CD8-positive, alpha-beta memory T cell (primary cell): ENCODE measurements at regions of chr7 and their contacts with region 1.

Region 1: DNA sequence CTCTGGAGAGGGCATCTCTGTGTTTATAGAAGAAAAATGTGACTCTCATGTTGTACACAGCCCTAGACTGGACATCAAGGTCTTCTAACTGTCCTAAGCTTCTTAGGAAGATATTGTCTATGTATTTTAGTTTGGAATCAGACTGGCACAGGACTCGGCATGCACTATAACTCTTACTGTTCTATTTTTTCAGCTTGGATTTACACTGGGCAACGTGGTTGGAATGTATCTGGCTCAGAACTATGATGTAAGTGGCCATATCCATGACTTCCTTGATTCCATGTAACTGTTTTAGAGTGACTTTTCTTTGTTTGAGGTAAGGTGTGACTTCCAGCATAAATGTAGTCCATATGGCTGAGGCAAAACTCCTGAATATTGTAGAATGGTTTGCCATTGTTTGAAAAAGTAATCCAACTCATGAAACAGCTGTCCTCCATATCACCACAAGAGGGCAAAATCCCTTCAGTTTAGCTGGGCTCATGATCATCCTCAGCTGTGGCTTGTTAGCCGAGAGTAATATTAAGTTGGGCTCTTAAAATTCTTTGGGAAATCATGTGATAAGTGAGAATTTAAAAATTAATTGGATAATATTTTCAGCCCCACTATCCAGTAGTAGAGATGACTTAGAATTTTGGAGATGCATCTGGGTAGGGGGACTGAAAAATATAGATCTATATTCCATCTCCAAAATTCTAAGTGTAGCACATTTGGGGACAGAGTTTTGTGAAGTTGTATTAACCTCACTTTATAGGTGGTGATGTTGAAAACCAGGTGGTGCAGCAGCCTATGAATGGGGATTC is 10.4 kb downstream of the STMP1 start:
- DNase-seq: no peak
- H3K4me3 ChIP-seq: no peak overlapping the region
- H3K4me3 Mint-ChIP-seq: no peak overlapping the region
- H3K27ac ChIP-seq: no peak overlapping the region
- H3K27ac Mint-ChIP-seq: peak overlapping the region in 1 of 8 donors; percentile 55
- H3K4me1 ChIP-seq: no peaks in the 10 kb centered on the region
- H3K4me1 Mint-ChIP-seq: peaks cover 21 to 41% (median 39%) of the 10 kb centered on the region in 3 donors
- H3K27me3 ChIP-seq: no peaks in the 10 kb centered on the region
- H3K27me3 Mint-ChIP-seq: no peaks in the 10 kb centered on the region

Region 2: DNA sequence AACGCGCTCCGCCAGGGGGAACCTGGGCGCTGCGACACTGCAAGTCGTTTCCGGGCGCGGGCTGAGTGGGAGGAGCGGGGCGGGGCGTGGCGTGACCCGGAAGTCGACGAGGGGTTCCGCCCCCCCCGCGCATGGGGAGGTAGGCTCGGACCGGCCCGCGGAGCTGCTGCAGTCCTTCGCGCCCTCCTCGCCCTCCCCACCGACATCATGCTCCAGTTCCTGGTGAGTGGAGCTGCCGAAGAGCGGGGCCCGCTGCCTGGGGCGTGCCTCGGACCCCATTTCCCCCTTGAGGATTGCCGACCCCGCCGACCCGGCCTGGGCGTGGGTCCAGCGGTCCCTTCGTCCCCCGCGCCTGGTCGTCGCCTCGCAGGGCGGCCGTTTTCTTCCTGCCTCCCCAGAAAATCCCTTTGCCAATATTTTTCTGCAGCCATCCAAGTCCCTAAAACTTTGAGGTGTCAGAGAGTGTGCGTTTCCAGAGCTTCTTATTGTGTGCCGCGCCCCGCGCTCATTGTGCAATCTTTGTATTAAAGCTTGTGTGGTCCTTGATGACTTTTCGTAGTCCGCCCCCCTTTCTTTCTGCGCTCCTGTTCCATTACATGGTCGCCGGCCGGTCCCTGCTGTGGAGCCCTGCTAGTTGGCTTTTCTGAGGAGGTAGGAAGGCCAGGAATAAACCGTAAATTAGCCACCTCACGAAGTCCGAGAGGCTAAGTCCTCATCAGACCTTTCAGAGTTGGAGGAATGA is 10.2 kb before region 1 on chr7 and contains the start of gene STMP1:
- CTCF ChIA-PET with region 1: interaction called, 16 read pairs
- POLR2A ChIA-PET with region 1: no interaction called
- DNase-seq: peak; percentile 92 to 98 (median 95)
- H3K4me3 ChIP-seq: peak within 1 kb of the TSS; percentile 62
- H3K4me3 Mint-ChIP-seq: peak within 1 kb of the TSS; percentile 91 to 99 (median 95)
- H3K27ac ChIP-seq: peak within 1 kb of the TSS; percentile 81
- H3K27ac Mint-ChIP-seq: peak within 1 kb of the TSS; percentile 74 to 97 (median 91)
- H3K4me1 ChIP-seq: peaks cover 28% of the 10 kb centered on the region
- H3K4me1 Mint-ChIP-seq: peaks cover 35 to 52% (median 50%) of the 10 kb centered on the region in 3 donors
- H3K27me3 ChIP-seq: no peaks in the 10 kb centered on the region
- H3K27me3 Mint-ChIP-seq: no peaks in the 10 kb centered on the region
- total RNA-seq, gene STMP1: 25.7 to 26.1 TPM